GM18951 (cell line): ENCODE measurements at regions of chr2 and their contacts with region 1.

Region 1: GRCh38 chr2:68487773-68488355 is 20.5 kb downstream of the APLF start:
- POLR2A ChIP-seq: no peak

Region 2: DNA sequence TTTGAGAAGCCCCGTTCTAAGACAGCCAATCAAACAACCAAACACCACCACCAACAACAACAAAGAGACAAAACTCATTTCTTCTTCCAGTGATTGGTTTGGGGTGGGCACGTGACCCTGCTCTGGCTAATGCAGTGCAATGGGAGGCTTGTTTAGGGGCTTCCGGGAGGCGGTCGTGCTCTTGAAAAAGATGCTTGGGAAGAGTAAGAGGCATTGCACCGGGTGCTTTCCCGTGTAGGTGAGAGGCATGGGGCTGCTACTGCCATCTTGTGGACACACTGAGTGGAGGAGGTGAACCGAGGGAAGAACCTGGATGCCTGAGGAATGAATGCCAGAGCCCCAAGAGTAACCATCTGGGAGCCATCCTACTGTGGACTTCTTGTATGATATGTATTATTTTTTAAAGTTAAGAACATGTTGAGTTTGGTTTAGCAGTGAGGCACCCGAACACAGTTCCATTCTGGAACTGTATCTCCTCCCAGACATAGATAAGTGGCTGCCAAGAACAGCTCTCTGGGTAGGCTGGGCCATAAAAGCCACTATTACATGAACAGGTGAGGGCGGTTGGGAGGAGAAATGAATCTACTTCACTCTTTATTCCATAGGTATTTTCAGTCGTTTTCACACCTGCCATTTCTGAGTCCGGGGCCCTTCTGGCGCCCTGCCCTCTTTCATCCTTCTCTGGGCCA is 227.6 kb after region 1 on chr2:
- in situ Hi-C with region 1: loop called (anchors 25 kb)
- POLR2A ChIP-seq: no peak

Region 3: GRCh38 chr2:68925295-68925896 is 437.5 kb after region 1 on chr2:
- in situ Hi-C with region 1: loop called (anchors 10 kb)
- POLR2A ChIP-seq: no peak